ENCODE measurements at regions of chr6 and their contacts with region 1.

Region 1: GRCh38 chr6:87589693-87590549 is at the starts of genes ORC3 and RARS2:
- DNase-seq: peak; percentile 96
- H3K4me3 ChIP-seq: peak within 1 kb of the TSS; percentile 73
- H3K4me3 Mint-ChIP-seq: peak within 1 kb of the TSS; percentile 93
- H3K27ac Mint-ChIP-seq: peak within 1 kb of the TSS; percentile 91
- H3K4me1 ChIP-seq: peaks cover 18% of the 10 kb centered on the region
- H3K4me1 Mint-ChIP-seq: peaks cover 15% of the 10 kb centered on the region
- H3K27me3 ChIP-seq: no peaks in the 10 kb centered on the region
- H3K27me3 Mint-ChIP-seq: no peaks in the 10 kb centered on the region
- CTCF ChIP-seq: no peak
- total RNA-seq, gene ORC3: 33.8 and 34.5 TPM in 2 replicates
- total RNA-seq, gene RARS2: 32.0 and 37.4 TPM in 2 replicates

Region 2: GRCh38 chr6:87574292-87574691 is 15.6 kb before region 1 on chr6:
- CTCF ChIA-PET with region 1: no interaction called
- POLR2A ChIA-PET with region 1: interaction called, 3 read pairs
- intact Hi-C with region 1: loop called (anchors 2 kb)
- DNase-seq: peak in 1 of 2 experiments; percentile 30
- H3K4me3 ChIP-seq: no peak overlapping the region
- H3K4me3 Mint-ChIP-seq: peak overlapping the region; percentile 0
- H3K27ac Mint-ChIP-seq: peak overlapping the region; percentile 17
- H3K4me1 ChIP-seq: peaks cover 20% of the 10 kb centered on the region
- H3K4me1 Mint-ChIP-seq: peaks cover 29% of the 10 kb centered on the region
- H3K27me3 ChIP-seq: no peaks in the 10 kb centered on the region
- H3K27me3 Mint-ChIP-seq: no peaks in the 10 kb centered on the region
- CTCF ChIP-seq: no peak

Region 3: GRCh38 chr6:87645080-87645479 is 55.2 kb after region 1 on chr6:
- CTCF ChIA-PET with region 1: no interaction called
- POLR2A ChIA-PET with region 1: no interaction called
- intact Hi-C with region 1: no loop called
- DNase-seq: no peak
- H3K4me3 ChIP-seq: no peak overlapping the region
- H3K4me3 Mint-ChIP-seq: no peak overlapping the region
- H3K27ac Mint-ChIP-seq: no peak overlapping the region
- H3K4me1 ChIP-seq: no peaks in the 10 kb centered on the region
- H3K4me1 Mint-ChIP-seq: no peaks in the 10 kb centered on the region
- H3K27me3 ChIP-seq: no peaks in the 10 kb centered on the region
- H3K27me3 Mint-ChIP-seq: no peaks in the 10 kb centered on the region
- CTCF ChIP-seq: no peak

Measured in Caco-2 (cell line).